Spleen (tissue), 13 donors: ENCODE measurements at regions of chr4 and their contacts with region 1.

Region 1: GRCh38 chr4:2811830-2812611 is 19.1 kb downstream of the SH3BP2 start:
- DNase-seq: peak; percentile 98
- H3K4me3 ChIP-seq: peak overlapping the region; percentile 57 to 91 (median 82)
- H3K27ac ChIP-seq: peak overlapping the region; percentile 84 to 97 (median 93)
- H3K4me1 ChIP-seq: peaks cover 71 to 97% (median 94%) of the 10 kb centered on the region in 6 donors
- H3K27me3 ChIP-seq: no peaks in the 10 kb centered on the region
- CTCF ChIP-seq: peak in 2 of 11 experiments; percentile 23 to 29
- POLR2A ChIP-seq: peak in 1 of 3 donors; percentile 50

Region 2: GRCh38 chr4:2116687-2117400 is 695.2 kb before region 1 on chr4:
- intact Hi-C with region 1: no loop called
- DNase-seq: no peak
- H3K4me3 ChIP-seq: no peak overlapping the region
- H3K27ac ChIP-seq: no peak overlapping the region
- H3K4me1 ChIP-seq: no peaks in the 10 kb centered on the region
- H3K27me3 ChIP-seq: no peaks in the 10 kb centered on the region
- CTCF ChIP-seq: no peak
- POLR2A ChIP-seq: no peak

Region 3: GRCh38 chr4:2761035-2761923 is 50.7 kb before region 1 on chr4:
- intact Hi-C with region 1: loop called (anchors 10 kb)
- DNase-seq: peak; percentile 81
- H3K4me3 ChIP-seq: no peak overlapping the region
- H3K27ac ChIP-seq: no peak overlapping the region
- H3K4me1 ChIP-seq: peaks cover 4 to 33% (median 23%) of the 10 kb centered on the region in 6 donors
- H3K27me3 ChIP-seq: no peaks in the 10 kb centered on the region
- CTCF ChIP-seq: peak in 2 of 11 experiments; percentile 6 to 16
- POLR2A ChIP-seq: no peak

Region 4: GRCh38 chr4:3007724-3008123 is 195.7 kb after region 1 on chr4:
- intact Hi-C with region 1: no loop called
- DNase-seq: no peak
- H3K4me3 ChIP-seq: no peak overlapping the region
- H3K27ac ChIP-seq: no peak overlapping the region
- H3K4me1 ChIP-seq: no peaks in the 10 kb centered on the region
- H3K27me3 ChIP-seq: no peaks in the 10 kb centered on the region
- CTCF ChIP-seq: no peak
- POLR2A ChIP-seq: no peak